Dorsolateral prefrontal cortex (tissue), 120 donors: ENCODE measurements at regions of chr19 and their contacts with region 1.

Region 1: GRCh38 chr19:3365836-3366752 is at the start of gene NFIC:
- DNase-seq: peak in 5 of 10 donors; percentile 65 to 77 (median 69)
- H3K4me3 ChIP-seq: peak within 1 kb of the TSS; percentile 59 to 90 (median 75)
- H3K27ac ChIP-seq: peak within 1 kb of the TSS; percentile 63 to 99 (median 92)
- H3K27me3 ChIP-seq: no peaks in the 10 kb centered on the region
- CTCF ChIP-seq: no peak
- total RNA-seq, gene NFIC: 98.0 to 269 (median 135) TPM

Region 2: DNA sequence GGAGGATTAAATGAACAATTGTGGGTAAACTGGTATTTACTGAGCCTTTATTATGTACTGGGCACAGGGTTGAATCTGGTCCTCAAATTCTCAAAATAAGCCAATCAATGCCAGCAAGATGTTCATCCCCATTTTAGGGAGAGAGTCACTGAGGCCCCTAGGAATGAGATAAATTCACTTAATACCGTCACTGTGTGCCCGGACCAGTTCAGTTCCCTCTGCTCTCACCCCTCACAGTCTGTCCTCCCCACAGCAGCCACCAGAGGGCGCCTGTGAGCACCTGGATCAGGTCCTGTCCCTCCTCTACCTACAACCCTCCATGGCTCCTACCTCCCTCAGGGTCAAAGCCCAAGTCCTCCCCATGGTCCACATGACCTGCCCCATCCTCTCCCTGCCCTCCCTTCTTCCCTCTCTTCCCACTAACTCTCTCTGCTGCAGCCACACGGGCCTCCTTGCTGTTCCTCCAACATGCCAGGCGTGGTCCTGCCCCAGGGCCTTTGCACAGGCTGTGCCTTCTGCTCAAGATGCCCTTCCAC is 41.7 kb before region 1 on chr19:
- intact Hi-C with region 1: no loop called
- DNase-seq: peak in 3 of 10 donors; percentile 22 to 47 (median 40)
- H3K4me3 ChIP-seq: no peak overlapping the region
- H3K27ac ChIP-seq: no peak overlapping the region
- H3K27me3 ChIP-seq: peaks cover 0 to 23% (median 4%) of the 10 kb centered on the region in 45 donors
- CTCF ChIP-seq: peak; percentile 14 to 76 (median 62)

Region 3: GRCh38 chr19:3398114-3398899 is 32.2 kb after region 1 on chr19:
- intact Hi-C with region 1: loop called in 1 of 2 experiments (anchors 2 kb)
- DNase-seq: peak; percentile 78 to 92 (median 88)
- H3K4me3 ChIP-seq: peak overlapping the region in 58 of 59 donors; percentile 21 to 71 (median 50)
- H3K27ac ChIP-seq: peak overlapping the region; percentile 78 to 100 (median 99)
- H3K27me3 ChIP-seq: no peaks in the 10 kb centered on the region
- CTCF ChIP-seq: peak in 6 of 56 donors; percentile 7 to 15 (median 13)